ENCODE measurements at regions of chr4 and their contacts with region 1.

Region 1: GRCh38 chr4:174358829-174359228 is 75.1 kb downstream of the CEP44 start:
- DNase-seq: no peak
- H3K4me3 ChIP-seq: no peak overlapping the region
- H3K27ac ChIP-seq: no peak overlapping the region
- H3K4me1 ChIP-seq: no peaks in the 10 kb centered on the region
- H3K27me3 ChIP-seq: no peaks in the 10 kb centered on the region
- CTCF ChIP-seq: no peak
- EP300 ChIP-seq: no peak
- POLR2A ChIP-seq: no peak

Region 2: GRCh38 chr4:174058846-174059245 is 300.0 kb before region 1 on chr4:
- intact Hi-C with region 1: no loop called
- DNase-seq: no peak
- H3K4me3 ChIP-seq: no peak overlapping the region
- H3K27ac ChIP-seq: no peak overlapping the region
- H3K4me1 ChIP-seq: no peaks in the 10 kb centered on the region
- H3K27me3 ChIP-seq: no peaks in the 10 kb centered on the region
- CTCF ChIP-seq: no peak
- EP300 ChIP-seq: no peak
- POLR2A ChIP-seq: no peak

Region 3: DNA sequence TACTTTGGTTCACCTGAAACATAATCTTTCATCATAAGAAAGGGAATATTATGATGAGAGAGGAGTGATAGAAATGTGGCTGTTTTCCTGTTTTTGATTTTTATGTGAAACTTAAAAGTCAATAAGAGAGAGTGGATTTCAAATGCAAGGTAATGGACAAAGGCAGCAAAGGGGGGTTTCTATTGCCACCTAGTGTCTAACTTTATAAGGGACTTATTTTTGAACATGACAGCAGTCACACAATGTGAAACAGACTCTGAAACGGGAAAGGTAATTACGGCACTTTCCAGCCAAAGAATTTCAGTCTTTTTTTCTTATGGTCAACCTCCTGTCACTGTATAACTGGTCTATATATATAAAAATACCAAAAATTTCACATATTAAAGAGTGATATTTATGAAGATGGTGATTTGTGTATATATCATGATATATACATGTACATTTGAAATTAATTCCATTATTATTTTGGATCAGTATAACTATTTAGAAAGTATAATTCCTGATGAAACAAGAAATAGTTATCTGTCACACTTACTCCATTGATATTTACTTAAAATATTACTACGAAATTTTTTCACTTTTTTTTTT is 202.5 kb before region 1 on chr4:
- intact Hi-C with region 1: no loop called
- DNase-seq: no peak
- H3K4me3 ChIP-seq: no peak overlapping the region
- H3K27ac ChIP-seq: no peak overlapping the region
- H3K4me1 ChIP-seq: no peaks in the 10 kb centered on the region
- H3K27me3 ChIP-seq: no peaks in the 10 kb centered on the region
- CTCF ChIP-seq: peak; percentile 23 to 60 (median 54)
- EP300 ChIP-seq: no peak
- POLR2A ChIP-seq: no peak

Region 4: DNA sequence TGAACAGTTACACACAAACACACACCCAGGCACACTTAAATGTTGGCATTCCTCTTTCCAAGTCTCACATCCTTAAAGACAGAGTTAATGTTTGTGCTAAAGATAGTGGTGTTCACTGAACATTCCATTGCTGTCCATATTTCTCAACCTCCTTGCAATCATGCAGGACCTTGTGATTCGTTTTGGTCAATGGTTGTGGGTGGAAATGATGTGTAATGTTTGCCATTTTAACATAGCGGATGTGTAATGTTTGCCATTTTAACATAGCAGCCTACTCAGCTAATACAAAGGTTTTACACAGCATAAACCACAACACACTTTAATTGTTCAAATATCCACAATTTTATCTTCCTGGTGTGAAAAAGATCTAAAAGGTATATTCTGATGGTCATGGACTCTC is 18.8 kb after region 1 on chr4:
- intact Hi-C with region 1: loop called in 1 of 4 experiments (anchors 2 kb)
- DNase-seq: no peak
- H3K4me3 ChIP-seq: no peak overlapping the region
- H3K27ac ChIP-seq: no peak overlapping the region
- H3K4me1 ChIP-seq: no peaks in the 10 kb centered on the region
- H3K27me3 ChIP-seq: no peaks in the 10 kb centered on the region
- CTCF ChIP-seq: no peak
- EP300 ChIP-seq: no peak
- POLR2A ChIP-seq: no peak